Activated T-helper 1 cell treated with anti-CD3 and anti-CD28 coated beads, Interleukin-12 subunit alpha, Interleukin-12 subunit beta, Interleukin-2, Interleukin-4 antibody, amounts not matched to agents 30 ng/mL and 10 ng/mL and 1 ng/mL, durations not matched to agents 14 hours and 24 hours and 36 hours (primary cell): ENCODE measurements at regions of chr1 and their contacts with region 1.

Region 1: GRCh38 chr1:183956559-183957188 is 80.9 kb downstream of the COLGALT2 start:
- DNase-seq: peak; percentile 69
- H3K4me3 Mint-ChIP-seq: peak overlapping the region; percentile 62
- H3K27ac Mint-ChIP-seq: no peak overlapping the region
- H3K4me1 Mint-ChIP-seq: peaks cover 14% of the 10 kb centered on the region
- H3K27me3 Mint-ChIP-seq: no peaks in the 10 kb centered on the region

Region 2: DNA sequence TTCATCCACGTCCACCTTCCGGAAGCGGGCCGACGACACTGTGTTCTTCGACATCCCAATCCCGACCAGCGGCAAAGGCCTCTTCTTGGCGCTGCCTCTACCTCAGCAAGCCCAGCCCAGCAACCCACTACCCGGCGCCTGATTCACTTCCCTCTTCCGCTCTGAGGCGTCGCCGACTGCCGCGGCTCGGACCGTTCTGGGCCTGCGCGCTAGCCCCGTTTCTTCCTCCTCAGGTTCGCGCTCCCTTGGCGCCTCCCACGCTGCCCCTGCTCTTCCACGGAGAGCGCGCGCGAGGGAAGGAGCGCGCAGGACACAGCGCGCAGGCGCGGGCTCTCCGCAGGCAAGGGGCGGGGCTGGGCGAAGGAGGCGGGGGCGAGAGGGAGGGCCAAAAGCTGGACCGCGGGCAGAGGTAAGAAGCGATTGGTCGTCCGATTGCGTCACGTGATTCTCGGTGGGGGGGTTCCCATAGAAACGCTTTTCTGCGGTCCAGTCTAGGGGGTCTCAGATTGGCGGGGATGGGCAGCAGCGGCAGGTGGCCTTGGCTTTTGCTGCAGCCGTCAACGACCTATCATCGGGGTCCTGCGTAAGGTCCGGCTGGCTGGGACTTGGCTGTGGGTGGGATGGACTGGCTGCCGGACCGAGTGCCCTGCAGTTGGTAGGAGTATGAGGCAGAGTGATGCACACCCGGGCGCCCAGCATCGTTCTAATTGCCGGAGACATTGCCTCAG is 320.9 kb before region 1 on chr1 and contains the start of gene ARPC5:
- intact Hi-C with region 1: loop called (anchors 1 kb)
- DNase-seq: peak; percentile 96
- H3K4me3 Mint-ChIP-seq: peak within 1 kb of the TSS; percentile 100
- H3K27ac Mint-ChIP-seq: peak within 1 kb of the TSS; percentile 100
- H3K4me1 Mint-ChIP-seq: peaks cover 46% of the 10 kb centered on the region
- H3K27me3 Mint-ChIP-seq: peaks cover 4% of the 10 kb centered on the region
- total RNA-seq, gene ARPC5: 146 and 154 TPM in 2 replicates

Region 3: DNA sequence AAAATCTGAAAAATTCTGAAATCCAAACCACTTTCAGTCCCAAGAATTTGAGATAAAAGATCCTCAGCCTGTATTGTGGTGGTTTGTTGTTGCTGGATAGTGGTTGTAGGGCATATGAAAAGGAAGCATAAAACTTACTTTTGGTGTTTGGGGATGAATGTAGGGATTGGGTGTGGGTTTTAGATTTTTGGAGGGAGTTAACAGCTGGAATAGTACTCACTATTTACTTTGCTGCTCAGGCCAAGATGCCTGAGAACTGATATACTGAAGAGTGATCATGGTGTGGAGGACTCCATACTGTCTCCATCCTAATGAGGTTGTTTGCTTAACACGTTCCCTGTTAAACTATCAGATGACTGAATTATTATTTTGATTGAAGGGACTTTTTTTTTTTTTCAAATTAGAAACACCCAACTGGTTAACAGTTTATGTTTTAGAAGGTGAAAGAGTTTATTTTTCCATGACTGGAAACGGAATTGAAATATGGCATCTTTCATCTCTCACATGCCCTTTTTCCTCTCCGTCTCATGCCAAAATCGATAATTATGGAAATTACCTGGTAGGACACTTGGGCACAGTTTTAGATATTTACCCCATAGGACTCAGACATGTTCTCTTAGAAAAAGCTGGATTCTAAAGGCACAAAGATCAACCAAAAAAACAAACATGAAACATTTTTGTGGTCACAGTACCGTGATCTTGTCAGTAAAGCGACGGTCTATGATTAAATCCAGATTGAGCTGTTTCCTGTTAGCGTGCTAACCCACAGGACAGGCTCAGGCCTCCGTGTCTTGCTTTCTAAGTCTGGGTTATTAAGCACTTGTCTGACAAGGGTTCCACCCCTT is 114.5 kb before region 1 on chr1:
- intact Hi-C with region 1: loop called (anchors 2 kb)
- DNase-seq: peak; percentile 20
- H3K4me3 Mint-ChIP-seq: peak overlapping the region; percentile 71
- H3K27ac Mint-ChIP-seq: peak overlapping the region; percentile 89
- H3K4me1 Mint-ChIP-seq: peaks cover 33% of the 10 kb centered on the region
- H3K27me3 Mint-ChIP-seq: no peaks in the 10 kb centered on the region

Region 4: DNA sequence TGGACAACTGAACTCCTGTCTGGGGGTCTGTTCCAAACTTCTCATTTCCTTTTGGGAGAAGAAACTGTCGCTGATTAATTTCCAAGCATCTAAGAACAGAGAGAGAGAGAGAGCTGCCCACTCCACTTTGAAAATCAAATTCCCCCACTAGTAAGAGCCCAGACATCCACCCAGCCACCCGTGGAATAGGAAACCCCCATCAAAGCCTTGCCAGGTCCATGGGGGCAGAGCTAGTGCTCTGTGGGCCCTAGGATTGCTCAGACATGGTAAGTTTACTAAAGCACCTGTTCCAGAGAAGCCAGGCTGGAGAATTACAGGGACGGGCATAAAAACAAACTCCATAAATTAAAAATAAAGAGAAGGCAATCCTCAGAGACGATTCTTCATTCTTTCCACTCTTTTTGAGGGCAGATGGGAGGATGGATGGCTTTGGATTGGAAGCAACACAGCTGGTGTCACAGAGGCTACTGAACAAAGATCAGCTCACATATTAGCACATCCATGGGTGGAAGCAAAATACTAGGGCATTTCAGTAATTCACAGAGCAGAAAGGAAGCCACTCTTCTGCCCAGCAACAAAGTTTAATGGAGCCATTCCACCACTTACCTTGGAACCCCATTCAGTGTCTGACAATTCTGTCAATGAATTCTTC is 23.0 kb before region 1 on chr1:
- intact Hi-C with region 1: loop called (anchors 1 kb)
- DNase-seq: no peak
- H3K4me3 Mint-ChIP-seq: no peak overlapping the region
- H3K27ac Mint-ChIP-seq: no peak overlapping the region
- H3K4me1 Mint-ChIP-seq: peaks cover 21% of the 10 kb centered on the region
- H3K27me3 Mint-ChIP-seq: peaks cover under 1% of the 10 kb centered on the region

Region 5: DNA sequence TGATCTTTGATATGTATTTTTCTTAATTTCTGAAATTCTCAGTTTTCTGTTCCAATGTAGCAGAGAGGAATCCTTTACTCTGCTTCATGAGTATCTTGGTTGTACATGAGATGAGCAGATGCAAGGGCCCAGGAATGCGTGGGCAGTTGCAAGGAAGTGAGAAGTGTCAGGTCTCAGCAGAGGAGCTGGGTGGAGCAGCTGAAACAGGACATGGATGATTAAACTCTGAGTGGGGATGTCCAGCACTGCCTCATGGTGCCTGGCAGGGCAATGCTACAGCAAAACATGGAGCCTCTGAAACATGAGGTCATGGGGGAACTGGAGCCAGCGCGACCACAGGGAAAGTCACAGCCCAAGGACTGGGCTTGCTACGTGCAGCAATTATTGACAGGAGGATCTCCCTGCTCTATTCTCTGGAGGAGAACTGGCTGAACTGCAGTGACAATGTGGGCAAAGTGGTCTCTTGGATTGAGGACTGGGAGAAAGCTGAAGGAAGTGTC is 32.5 kb after region 1 on chr1:
- intact Hi-C with region 1: loop called (anchors 1 kb)
- DNase-seq: no peak
- H3K4me3 Mint-ChIP-seq: no peak overlapping the region
- H3K27ac Mint-ChIP-seq: peak overlapping the region; percentile 47
- H3K4me1 Mint-ChIP-seq: peaks cover 26% of the 10 kb centered on the region
- H3K27me3 Mint-ChIP-seq: peaks cover 5% of the 10 kb centered on the region

Region 6: GRCh38 chr1:184051485-184052193 is 95.0 kb after region 1 on chr1 and contains the start of gene TSEN15:
- intact Hi-C with region 1: loop called (anchors 1 kb)
- DNase-seq: peak; percentile 71
- H3K4me3 Mint-ChIP-seq: peak within 1 kb of the TSS; percentile 99
- H3K27ac Mint-ChIP-seq: peak within 1 kb of the TSS; percentile 99
- H3K4me1 Mint-ChIP-seq: peaks cover 40% of the 10 kb centered on the region
- H3K27me3 Mint-ChIP-seq: peaks cover 28% of the 10 kb centered on the region
- total RNA-seq, gene TSEN15: 49.8 and 50.2 TPM in 2 replicates

Region 7: GRCh38 chr1:184973272-184974055 is 1016.8 kb after region 1 on chr1:
- intact Hi-C with region 1: loop called (anchors 5 kb)
- DNase-seq: no peak
- H3K4me3 Mint-ChIP-seq: peak overlapping the region; percentile 90
- H3K27ac Mint-ChIP-seq: peak overlapping the region; percentile 95
- H3K4me1 Mint-ChIP-seq: peaks cover 67% of the 10 kb centered on the region
- H3K27me3 Mint-ChIP-seq: peaks cover 15% of the 10 kb centered on the region